Activated B cell treated with CpG ODN at 0.5 μM for 24 hours (primary cell): ENCODE measurements at regions of chr13 and their contacts with region 1.

Region 1: DNA sequence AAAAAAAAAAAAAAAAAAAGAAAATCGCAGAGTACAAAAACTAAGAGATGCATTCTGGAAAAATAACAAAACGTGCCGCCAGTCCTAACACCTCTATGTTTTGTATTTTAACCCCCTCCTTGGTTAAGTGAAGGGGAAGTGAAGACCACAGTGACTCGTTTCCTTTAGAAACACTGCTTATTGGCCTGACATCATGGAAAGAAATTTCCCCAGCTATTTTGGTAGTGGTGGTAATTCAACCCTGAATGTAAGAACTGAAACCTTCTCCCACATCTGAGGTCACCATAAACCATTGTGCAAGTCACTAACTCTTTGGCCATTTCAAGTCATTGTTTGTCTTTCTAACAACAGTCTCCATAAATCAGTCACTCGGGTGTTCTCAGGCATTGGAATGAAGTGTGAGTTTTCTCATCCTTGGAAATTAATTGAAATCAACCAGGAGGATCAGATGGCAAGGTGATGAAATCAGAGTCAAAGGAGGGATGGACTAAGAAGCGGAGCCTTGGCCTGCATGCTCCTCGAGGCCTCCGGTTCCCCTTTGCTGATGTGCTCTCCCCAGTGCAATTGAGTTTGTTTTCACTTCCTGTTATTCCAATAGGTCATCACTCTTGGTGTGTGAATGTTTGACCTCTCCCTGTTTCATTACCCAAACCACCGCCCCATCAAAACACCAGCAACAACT is 443.9 kb downstream of the FGF9 start:
- DNase-seq: no peak
- ATAC-seq: peak; percentile 80
- H3K4me3 Mint-ChIP-seq: peak overlapping the region; percentile 77
- H3K27ac Mint-ChIP-seq: peak overlapping the region; percentile 92
- H3K4me1 Mint-ChIP-seq: peaks cover 55% of the 10 kb centered on the region
- H3K27me3 Mint-ChIP-seq: no peaks in the 10 kb centered on the region
- CTCF ChIP-seq: no peak

Region 2: GRCh38 chr13:21670883-21671619 is 443.7 kb before region 1 on chr13 and contains the start of gene FGF9:
- CTCF ChIA-PET with region 1: no interaction called
- POLR2A ChIA-PET with region 1: interaction called, 3 read pairs
- intact Hi-C with region 1: loop called (anchors 1 kb)
- DNase-seq: peak; percentile 76
- ATAC-seq: peak; percentile 77
- H3K4me3 Mint-ChIP-seq: peak within 1 kb of the TSS; percentile 85
- H3K27ac Mint-ChIP-seq: peak within 1 kb of the TSS; percentile 61
- H3K4me1 Mint-ChIP-seq: peaks cover 48% of the 10 kb centered on the region
- H3K27me3 Mint-ChIP-seq: peaks cover 43% of the 10 kb centered on the region
- CTCF ChIP-seq: no peak
- total RNA-seq, gene FGF9: 0.22 and 0.49 TPM in 2 replicates

Region 3: GRCh38 chr13:22073718-22074117 is 41.1 kb before region 1 on chr13:
- CTCF ChIA-PET with region 1: no interaction called
- POLR2A ChIA-PET with region 1: interaction called, 5 read pairs
- intact Hi-C with region 1: loop called (anchors 2 kb)
- DNase-seq: no peak
- ATAC-seq: peak; percentile 61
- H3K4me3 Mint-ChIP-seq: peak overlapping the region; percentile 32
- H3K27ac Mint-ChIP-seq: no peak overlapping the region
- H3K4me1 Mint-ChIP-seq: peaks cover 22% of the 10 kb centered on the region
- H3K27me3 Mint-ChIP-seq: no peaks in the 10 kb centered on the region
- CTCF ChIP-seq: no peak

Region 4: GRCh38 chr13:22161871-22162270 is 47.1 kb after region 1 on chr13:
- CTCF ChIA-PET with region 1: no interaction called
- POLR2A ChIA-PET with region 1: no interaction called
- intact Hi-C with region 1: loop called (anchors 1 kb)
- DNase-seq: no peak
- ATAC-seq: peak; percentile 73
- H3K4me3 Mint-ChIP-seq: peak overlapping the region; percentile 52
- H3K27ac Mint-ChIP-seq: peak overlapping the region; percentile 53
- H3K4me1 Mint-ChIP-seq: peaks cover 26% of the 10 kb centered on the region
- H3K27me3 Mint-ChIP-seq: no peaks in the 10 kb centered on the region
- CTCF ChIP-seq: no peak

Region 5: DNA sequence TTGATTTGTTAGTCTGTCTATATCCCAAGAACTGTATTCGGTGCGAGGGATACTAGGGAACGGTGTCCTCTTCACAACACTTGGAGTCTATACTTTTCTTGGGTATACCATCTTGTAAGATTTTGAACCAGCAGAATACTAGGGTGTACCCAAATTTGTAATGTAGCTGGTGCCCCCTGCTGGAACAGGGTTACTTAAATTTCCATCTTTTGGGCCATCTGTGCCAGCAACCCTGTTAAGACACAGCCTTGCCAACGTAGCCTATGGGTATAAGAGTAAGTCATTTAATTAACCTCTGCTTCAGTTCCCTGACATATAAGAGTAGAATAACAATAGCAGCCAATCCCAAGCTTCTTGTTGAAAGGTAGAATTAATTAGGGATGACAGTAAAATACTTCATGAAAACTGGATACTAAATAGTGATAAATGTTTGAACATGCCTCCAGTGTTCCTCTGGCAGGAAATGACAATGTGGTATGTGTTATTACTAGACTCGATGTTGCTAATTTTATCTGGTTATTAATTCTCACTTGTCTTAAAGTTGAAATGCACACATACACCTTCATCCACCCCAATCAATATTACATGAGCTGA is 163.7 kb after region 1 on chr13:
- CTCF ChIA-PET with region 1: no interaction called
- POLR2A ChIA-PET with region 1: no interaction called
- intact Hi-C with region 1: loop called (anchors 2 kb)
- DNase-seq: no peak
- ATAC-seq: peak; percentile 54
- H3K4me3 Mint-ChIP-seq: no peak overlapping the region
- H3K27ac Mint-ChIP-seq: no peak overlapping the region
- H3K4me1 Mint-ChIP-seq: peaks cover 4% of the 10 kb centered on the region
- H3K27me3 Mint-ChIP-seq: no peaks in the 10 kb centered on the region
- CTCF ChIP-seq: no peak